ENCODE measurements at regions of chr3 and their contacts with region 1.

Region 1: DNA sequence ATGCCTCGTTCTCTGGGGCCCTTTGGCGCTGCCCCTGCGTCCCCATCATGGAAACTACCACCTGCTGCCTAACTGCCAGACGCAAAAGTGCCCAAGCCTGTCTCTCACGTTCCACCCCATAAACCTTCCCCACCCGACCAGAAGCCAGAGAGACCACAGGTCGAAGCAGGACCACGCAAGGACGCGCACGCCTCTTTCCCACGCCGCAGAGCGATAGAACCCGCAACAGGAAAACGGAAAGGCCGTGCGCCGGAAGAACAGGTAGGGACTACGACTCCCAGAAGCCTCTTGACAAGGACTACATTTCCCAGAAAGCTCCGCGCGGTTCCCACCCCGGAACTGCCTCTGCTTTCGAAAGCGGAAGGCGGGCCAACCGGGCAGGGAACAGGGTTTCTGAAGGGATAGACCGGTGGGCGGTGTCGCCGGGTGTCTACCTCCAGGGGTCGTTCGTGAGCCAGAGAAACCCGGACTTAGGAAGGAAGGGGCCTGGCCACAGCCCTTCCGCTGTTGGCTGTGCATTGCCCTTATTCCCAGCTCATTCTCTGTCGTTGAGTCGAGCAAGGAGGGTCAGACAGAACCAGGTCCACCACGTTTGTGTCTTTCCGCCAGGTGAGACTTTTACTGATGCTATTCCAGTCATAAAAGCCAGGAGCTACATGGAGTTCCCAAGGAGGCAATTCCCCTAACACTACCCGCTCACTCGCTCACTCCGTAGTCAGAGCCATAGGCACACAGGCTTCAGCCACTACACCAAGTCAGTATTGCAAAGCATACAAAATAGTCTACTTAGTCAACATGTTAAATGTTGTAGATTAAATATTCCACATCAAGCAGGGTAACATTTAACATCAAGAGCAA is 56.6 kb upstream of the ZBTB38 start:
- H3K4me3 Mint-ChIP-seq: peak overlapping the region; percentile 88
- H3K27ac Mint-ChIP-seq: peak overlapping the region; percentile 86
- H3K4me1 Mint-ChIP-seq: peaks cover 48% of the 10 kb centered on the region
- H3K27me3 Mint-ChIP-seq: no peaks in the 10 kb centered on the region

Region 2: GRCh38 chr3:141368062-141368924 is 56.6 kb after region 1 on chr3 and contains the start of gene ZBTB38:
- intact Hi-C with region 1: loop called (anchors 5 kb)
- H3K4me3 Mint-ChIP-seq: peak within 1 kb of the TSS; percentile 41
- H3K27ac Mint-ChIP-seq: peak within 1 kb of the TSS; percentile 87
- H3K4me1 Mint-ChIP-seq: peaks cover 34% of the 10 kb centered on the region
- H3K27me3 Mint-ChIP-seq: no peaks in the 10 kb centered on the region

Region 3: DNA sequence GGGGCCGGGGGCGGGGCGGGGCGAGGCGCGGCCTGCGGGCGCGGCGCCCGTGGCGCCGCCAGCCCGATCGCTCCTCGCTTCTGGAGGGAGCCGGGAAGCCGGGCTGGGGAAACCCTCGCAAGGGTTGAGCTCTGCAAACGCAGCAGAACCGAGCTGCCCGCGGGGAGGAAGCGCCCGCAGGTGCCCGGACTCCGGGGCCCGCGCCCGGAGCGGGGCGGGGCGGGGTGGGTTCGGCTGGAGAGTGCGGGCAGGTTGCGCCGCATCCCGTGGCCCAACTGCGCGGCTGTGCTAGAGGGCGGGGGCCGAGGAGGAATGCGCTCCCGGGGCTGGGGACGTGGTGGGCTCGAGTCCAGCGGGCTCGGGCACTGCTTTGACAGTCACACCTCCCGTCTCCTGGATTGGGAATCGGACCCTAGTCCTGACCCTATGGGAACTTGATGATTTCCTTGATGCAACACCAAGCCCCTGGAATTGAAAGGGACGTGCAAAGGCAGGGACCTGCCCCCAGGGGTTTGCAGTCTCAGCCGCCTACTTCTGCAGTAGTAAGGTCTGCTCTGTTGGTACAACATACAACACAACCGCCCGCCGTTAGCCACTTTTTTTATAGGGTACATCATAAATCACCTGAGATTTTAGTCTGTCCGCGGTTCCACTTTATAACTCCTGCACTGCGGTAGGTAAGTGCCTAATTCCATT is 90.9 kb after region 1 on chr3:
- intact Hi-C with region 1: loop called (anchors 2 kb)
- H3K4me3 Mint-ChIP-seq: peak overlapping the region; percentile 78
- H3K27ac Mint-ChIP-seq: peak overlapping the region; percentile 85
- H3K4me1 Mint-ChIP-seq: peaks cover 42% of the 10 kb centered on the region
- H3K27me3 Mint-ChIP-seq: no peaks in the 10 kb centered on the region

Region 4: GRCh38 chr3:141452036-141452435 is 140.3 kb after region 1 on chr3:
- intact Hi-C with region 1: loop called (anchors 2 kb)
- H3K4me3 Mint-ChIP-seq: no peak overlapping the region
- H3K27ac Mint-ChIP-seq: no peak overlapping the region
- H3K4me1 Mint-ChIP-seq: peaks cover 13% of the 10 kb centered on the region
- H3K27me3 Mint-ChIP-seq: no peaks in the 10 kb centered on the region

Region 5: GRCh38 chr3:141561426-141562034 is 249.8 kb after region 1 on chr3:
- intact Hi-C with region 1: loop called (anchors 10 kb)
- H3K4me3 Mint-ChIP-seq: no peak overlapping the region
- H3K27ac Mint-ChIP-seq: no peak overlapping the region
- H3K4me1 Mint-ChIP-seq: no peaks in the 10 kb centered on the region
- H3K27me3 Mint-ChIP-seq: no peaks in the 10 kb centered on the region